ENCODE measurements at regions of chr17 and their contacts with region 1.

Region 1: GRCh38 chr17:67602956-67603355 is 114.8 kb upstream of the NOL11 start:
- DNase-seq: no peak
- ATAC-seq: no peak
- H3K4me3 ChIP-seq: no peak overlapping the region
- H3K27ac ChIP-seq: no peak overlapping the region
- H3K4me1 ChIP-seq: peaks cover 14 to 19% of the 10 kb centered on the region in 2 donors
- H3K27me3 ChIP-seq: no peaks in the 10 kb centered on the region
- CTCF ChIP-seq: peak in 1 of 5 experiments; percentile 27
- POLR2A ChIP-seq: no peak

Region 2: GRCh38 chr17:67546578-67547527 is 56.1 kb before region 1 on chr17:
- in situ Hi-C with region 1: loop called in 1 of 4 experiments (anchors 10 kb)
- intact Hi-C with region 1: no loop called
- DNase-seq: no peak
- ATAC-seq: no peak
- H3K4me3 ChIP-seq: no peak overlapping the region
- H3K27ac ChIP-seq: peak overlapping the region in 2 of 4 donors; percentile 0 to 48
- H3K4me1 ChIP-seq: peaks cover 5 to 12% of the 10 kb centered on the region in 2 donors
- H3K27me3 ChIP-seq: no peaks in the 10 kb centered on the region
- CTCF ChIP-seq: no peak
- POLR2A ChIP-seq: no peak